HEK293 (cell line): ENCODE measurements at regions of chr3 and their contacts with region 1.

Region 1: DNA sequence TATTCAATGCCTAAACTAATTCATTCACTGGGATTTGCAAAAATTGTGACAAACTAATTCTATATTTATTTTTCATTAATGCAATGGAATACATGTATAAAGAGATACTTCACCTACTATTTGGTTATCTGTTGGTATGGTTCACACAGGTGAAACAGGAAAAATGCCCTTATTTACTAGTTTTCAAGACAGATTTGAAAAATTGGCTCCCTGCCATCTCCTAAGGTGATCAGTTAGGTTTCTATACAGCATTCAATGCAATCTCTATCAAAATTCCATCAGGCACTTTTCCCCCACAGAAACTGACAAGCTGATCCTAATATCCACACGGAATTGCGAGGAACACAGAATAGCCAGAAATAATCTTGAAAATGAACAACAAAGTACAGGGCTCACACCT is 101.1 kb downstream of the DLG1 start:
- H3K4me3 ChIP-seq: no peak overlapping the region
- H3K27ac ChIP-seq: no peak overlapping the region
- H3K4me1 ChIP-seq: no peaks in the 10 kb centered on the region
- CTCF ChIP-seq: no peak

Region 2: GRCh38 chr3:197186887-197187588 is 10.3 kb before region 1 on chr3:
- CTCF ChIA-PET with region 1: interaction called, 11 read pairs
- POLR2A ChIA-PET with region 1: no interaction called
- H3K4me3 ChIP-seq: no peak overlapping the region
- H3K27ac ChIP-seq: no peak overlapping the region
- H3K4me1 ChIP-seq: no peaks in the 10 kb centered on the region
- CTCF ChIP-seq: no peak

Region 3: DNA sequence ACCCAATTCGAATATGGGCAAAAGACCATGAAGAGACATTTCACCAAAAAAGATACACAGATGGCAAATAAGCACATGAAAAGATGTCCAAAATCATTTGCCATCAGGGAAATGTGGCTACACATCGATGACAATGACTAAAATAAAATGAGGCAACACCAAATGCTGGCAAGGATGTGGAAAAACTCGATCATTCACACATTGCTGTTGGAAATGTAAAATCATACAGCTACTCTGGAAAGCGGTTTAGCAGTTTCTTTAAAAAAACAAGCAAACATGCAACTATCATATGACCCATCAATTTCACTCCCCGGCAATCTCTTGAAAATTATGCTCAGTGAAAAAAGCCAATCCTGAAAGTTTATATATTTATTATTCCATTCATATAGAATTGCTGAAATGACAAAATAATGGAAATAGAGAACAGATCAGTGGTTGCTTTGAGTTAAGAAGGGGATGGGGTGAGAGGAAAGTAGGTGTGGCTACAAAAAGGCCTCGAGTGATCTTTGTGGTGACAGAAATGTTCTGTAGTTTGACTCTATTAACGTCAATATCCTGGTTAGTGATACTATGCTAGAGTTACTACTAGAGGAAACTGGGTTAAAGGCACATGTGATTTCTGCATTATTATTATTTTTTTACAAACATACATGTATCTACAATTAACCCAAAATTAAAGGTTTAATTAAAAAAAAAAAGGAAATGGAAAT is 56.1 kb after region 1 on chr3:
- CTCF ChIA-PET with region 1: no interaction called
- POLR2A ChIA-PET with region 1: no interaction called
- H3K4me3 ChIP-seq: no peak overlapping the region
- H3K27ac ChIP-seq: no peak overlapping the region
- H3K4me1 ChIP-seq: no peaks in the 10 kb centered on the region
- CTCF ChIP-seq: no peak